A673 (cell line): ENCODE measurements at regions of chr14 and their contacts with region 1.

Region 1: DNA sequence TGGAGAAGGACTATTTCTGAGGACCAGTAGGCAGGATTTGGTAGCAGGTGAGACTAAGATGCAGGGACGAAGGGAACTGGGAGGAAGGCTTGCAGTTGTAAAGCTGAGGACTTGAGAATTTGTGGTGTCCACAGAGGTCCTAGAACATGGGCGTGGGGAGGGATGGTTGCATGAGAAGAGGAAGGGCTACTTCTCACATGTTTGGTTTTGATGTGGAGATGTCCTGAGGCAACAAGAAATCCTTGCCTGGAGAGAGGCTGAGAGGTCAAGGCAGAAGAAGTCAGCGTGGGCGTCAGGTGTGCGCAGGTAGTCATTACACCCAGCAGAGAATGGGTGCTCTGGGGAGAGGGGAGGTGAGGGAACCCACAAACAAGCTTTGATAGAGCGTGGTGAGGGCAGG is 5.7 kb upstream of the RABGGTA start:
- DNase-seq: no peak
- H3K4me3 ChIP-seq: no peak overlapping the region
- H3K27ac ChIP-seq: no peak overlapping the region
- H3K4me1 ChIP-seq: no peaks in the 10 kb centered on the region
- H3K27me3 ChIP-seq: no peaks in the 10 kb centered on the region
- CTCF ChIP-seq: no peak

Region 2: DNA sequence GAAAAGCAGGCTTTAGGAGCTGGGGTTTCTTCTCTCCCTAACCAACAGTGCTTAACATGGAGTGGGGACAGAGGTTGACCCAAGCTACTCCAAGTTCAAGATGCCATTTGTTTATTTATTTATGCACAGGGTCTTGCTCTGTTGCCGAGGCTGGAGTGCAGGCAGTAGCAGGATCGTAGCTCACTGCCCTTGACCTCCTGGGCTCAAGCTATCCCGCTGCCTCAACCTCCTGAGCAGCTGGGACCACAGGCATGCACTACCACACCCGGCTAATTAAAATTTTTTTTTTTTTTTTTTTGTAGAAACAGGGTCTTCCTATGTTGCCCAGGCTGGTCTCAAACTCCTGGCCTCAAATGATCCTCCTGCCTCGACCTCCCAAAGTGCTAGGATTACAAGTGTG is 722.8 kb before region 1 on chr14:
- CTCF ChIA-PET with region 1: no interaction called
- POLR2A ChIA-PET with region 1: interaction called, 10 read pairs
- intact Hi-C with region 1: no loop called
- DNase-seq: no peak
- H3K4me3 ChIP-seq: no peak overlapping the region
- H3K27ac ChIP-seq: no peak overlapping the region
- H3K4me1 ChIP-seq: peaks cover 13% of the 10 kb centered on the region
- H3K27me3 ChIP-seq: no peaks in the 10 kb centered on the region
- CTCF ChIP-seq: no peak